ENCODE measurements at regions of chr17 and their contacts with region 1.

Region 1: GRCh38 chr17:17890773-17891759 is 54.3 kb upstream of the SREBF1 start:
- DNase-seq: peak; percentile 66
- H3K4me3 ChIP-seq: no peak overlapping the region
- H3K27ac ChIP-seq: no peak overlapping the region
- H3K4me1 ChIP-seq: no peaks in the 10 kb centered on the region
- H3K27me3 ChIP-seq: no peaks in the 10 kb centered on the region
- CTCF ChIP-seq: peak; percentile 83 to 91
- POLR2A ChIP-seq: no peak

Region 2: GRCh38 chr17:17877529-17878358 is 13.3 kb before region 1 on chr17:
- CTCF ChIA-PET with region 1: interaction called, 11 read pairs
- POLR2A ChIA-PET with region 1: no interaction called
- dilution Hi-C with region 1: no loop called
- intact Hi-C with region 1: no loop called
- DNase-seq: peak; percentile 98
- H3K4me3 ChIP-seq: peak overlapping the region in 1 of 3 experiments; percentile 4
- H3K27ac ChIP-seq: peak overlapping the region; percentile 81
- H3K4me1 ChIP-seq: peaks cover 29% of the 10 kb centered on the region
- H3K27me3 ChIP-seq: no peaks in the 10 kb centered on the region
- CTCF ChIP-seq: peak in 1 of 2 donors; percentile 23
- POLR2A ChIP-seq: peak; percentile 20

Region 3: GRCh38 chr17:18025241-18025944 is 134.3 kb after region 1 on chr17:
- CTCF ChIA-PET with region 1: interaction called, 10 read pairs
- POLR2A ChIA-PET with region 1: no interaction called
- dilution Hi-C with region 1: loop called (anchors 25 kb)
- intact Hi-C with region 1: no loop called
- DNase-seq: peak; percentile 19
- H3K4me3 ChIP-seq: no peak overlapping the region
- H3K27ac ChIP-seq: no peak overlapping the region
- H3K4me1 ChIP-seq: no peaks in the 10 kb centered on the region
- H3K27me3 ChIP-seq: no peaks in the 10 kb centered on the region
- CTCF ChIP-seq: no peak
- POLR2A ChIP-seq: no peak

Region 4: DNA sequence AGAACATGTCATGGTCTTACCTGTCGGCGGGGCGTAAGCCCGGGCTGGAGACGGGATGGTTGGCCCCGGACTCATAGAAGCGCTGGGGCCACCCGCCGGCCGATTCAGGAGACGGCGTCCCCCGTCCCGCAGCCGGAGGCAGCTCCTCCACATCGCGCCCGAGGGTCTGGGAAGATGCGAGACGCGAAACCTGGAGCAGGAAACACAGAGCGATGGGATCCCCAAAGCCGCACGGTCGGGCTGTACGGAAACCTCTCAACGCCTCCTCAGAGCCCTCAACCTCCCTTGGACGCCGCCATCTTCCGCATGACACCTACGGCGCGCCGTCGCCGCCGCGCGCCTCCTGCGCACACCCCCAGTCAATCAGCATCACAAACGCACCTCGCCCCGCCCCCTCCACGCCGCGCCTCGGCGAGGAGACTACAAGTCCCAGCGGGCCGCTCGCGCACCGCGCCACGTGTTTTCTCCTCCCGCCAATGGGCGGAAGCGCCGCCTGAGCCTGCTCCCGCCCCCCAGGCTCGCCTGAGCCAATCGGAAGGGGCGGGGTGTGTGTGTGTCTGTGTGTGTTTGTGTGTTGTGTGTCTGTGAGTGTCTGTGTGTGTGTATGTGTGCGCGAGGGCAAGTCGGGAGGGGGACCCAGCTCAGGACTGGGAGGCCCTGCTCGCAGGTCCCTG is 147.9 kb after region 1 on chr17 and contains the starts of genes ATPAF2 and GID4:
- CTCF ChIA-PET with region 1: interaction called, 70 read pairs
- POLR2A ChIA-PET with region 1: no interaction called
- dilution Hi-C with region 1: loop called (anchors 25 kb)
- intact Hi-C with region 1: no loop called
- DNase-seq: peak; percentile 99
- H3K4me3 ChIP-seq: peak within 1 kb of the TSS; percentile 90 to 96 (median 91)
- H3K27ac ChIP-seq: peak within 1 kb of the TSS; percentile 58
- H3K4me1 ChIP-seq: peaks cover 20% of the 10 kb centered on the region
- H3K27me3 ChIP-seq: no peaks in the 10 kb centered on the region
- CTCF ChIP-seq: peak in 1 of 2 donors; percentile 3
- POLR2A ChIP-seq: peak; percentile 60
- total RNA-seq, gene ATPAF2: 32.1 and 35.7 TPM in 2 replicates
- total RNA-seq, gene GID4: 10.1 and 11.3 TPM in 2 replicates